Spleen (tissue), 13 donors: ENCODE measurements at regions of chr6 and their contacts with region 1.

Region 1: DNA sequence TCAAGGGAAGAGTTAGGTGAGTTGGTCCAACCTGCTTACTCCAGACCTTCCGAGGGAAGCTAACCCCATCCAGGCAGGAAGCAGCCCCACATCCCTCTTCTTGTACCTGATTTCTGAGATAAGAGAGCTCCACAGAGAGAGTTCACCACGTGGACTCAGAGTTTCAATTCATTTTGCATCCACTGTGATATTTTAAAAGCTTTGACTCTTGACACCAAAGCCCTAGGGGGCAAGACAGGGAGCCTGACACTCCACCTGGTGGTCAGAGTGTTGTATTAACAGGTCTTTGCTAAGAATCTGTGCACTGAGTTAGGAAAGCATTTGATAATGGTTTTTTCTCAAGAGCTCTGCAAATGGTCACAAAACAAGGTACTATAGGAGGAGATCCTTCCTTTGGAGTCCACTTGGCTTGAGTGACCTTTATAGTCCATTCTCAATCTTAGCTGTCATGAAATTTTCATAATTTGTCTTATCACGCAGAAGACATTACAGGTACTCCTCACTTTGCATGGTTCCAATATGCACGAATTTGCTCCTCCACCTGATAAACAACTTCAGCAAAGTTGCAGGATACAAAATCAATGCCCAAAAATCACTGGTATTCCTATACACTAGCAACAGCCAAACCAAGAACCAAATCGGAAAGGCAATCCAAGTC is 56.2 kb upstream of the RIPOR2 start:
- DNase-seq: peak; percentile 88
- H3K4me3 ChIP-seq: no peak overlapping the region
- H3K27ac ChIP-seq: peak overlapping the region in 7 of 8 donors; percentile 8 to 92 (median 62)
- H3K4me1 ChIP-seq: peaks cover 9 to 76% (median 34%) of the 10 kb centered on the region in 6 donors
- H3K27me3 ChIP-seq: no peaks in the 10 kb centered on the region
- CTCF ChIP-seq: peak; percentile 71 to 89 (median 80)
- POLR2A ChIP-seq: no peak

Region 2: DNA sequence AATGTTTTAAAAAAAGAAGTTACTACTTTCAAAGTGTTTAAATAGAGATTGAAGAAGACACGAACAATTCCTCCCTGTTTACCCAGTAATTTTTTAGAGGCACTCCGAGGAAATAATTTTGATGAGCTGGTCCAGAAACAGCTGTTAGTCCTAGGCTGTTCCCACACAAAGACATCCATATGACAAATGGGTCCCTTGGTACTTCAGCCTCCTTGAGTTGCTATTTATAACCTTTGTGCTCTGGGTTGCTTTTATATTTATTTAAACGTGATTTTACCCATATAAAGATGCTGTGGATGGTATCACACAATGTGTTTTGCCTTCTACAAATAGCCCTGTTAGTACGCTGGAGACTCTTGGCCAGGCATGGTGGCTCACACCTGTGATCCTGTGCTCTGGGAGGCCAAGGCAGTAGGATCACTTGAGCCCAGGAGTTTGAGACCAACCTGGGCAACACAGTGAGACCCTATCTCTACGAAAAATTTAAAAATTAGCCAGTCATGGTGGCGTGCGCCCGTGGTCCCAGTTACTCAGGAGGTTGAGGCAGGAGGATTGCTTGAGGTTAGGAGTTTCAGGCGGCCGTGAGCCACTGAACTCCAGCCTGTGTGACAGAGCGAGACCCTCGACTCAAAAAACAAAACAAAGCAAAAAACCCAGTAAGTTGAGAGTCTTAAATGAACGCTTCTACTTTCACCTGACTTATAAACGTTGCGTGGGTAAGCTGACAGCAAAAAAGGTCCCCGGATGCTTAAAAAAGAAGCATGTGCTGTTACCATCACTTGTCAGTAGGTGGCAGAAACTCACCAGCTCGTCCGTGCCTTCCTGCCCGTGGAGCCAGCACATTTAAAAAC is 136.3 kb before region 1 on chr6:
- intact Hi-C with region 1: loop called (anchors 5 kb)
- DNase-seq: peak; percentile 85
- H3K4me3 ChIP-seq: peak overlapping the region in 1 of 8 donors; percentile 5
- H3K27ac ChIP-seq: peak overlapping the region in 7 of 8 donors; percentile 4 to 93 (median 88)
- H3K4me1 ChIP-seq: peaks cover 42 to 67% (median 52%) of the 10 kb centered on the region in 6 donors
- H3K27me3 ChIP-seq: no peaks in the 10 kb centered on the region
- CTCF ChIP-seq: peak; percentile 66 to 93 (median 85)
- POLR2A ChIP-seq: no peak

Region 3: DNA sequence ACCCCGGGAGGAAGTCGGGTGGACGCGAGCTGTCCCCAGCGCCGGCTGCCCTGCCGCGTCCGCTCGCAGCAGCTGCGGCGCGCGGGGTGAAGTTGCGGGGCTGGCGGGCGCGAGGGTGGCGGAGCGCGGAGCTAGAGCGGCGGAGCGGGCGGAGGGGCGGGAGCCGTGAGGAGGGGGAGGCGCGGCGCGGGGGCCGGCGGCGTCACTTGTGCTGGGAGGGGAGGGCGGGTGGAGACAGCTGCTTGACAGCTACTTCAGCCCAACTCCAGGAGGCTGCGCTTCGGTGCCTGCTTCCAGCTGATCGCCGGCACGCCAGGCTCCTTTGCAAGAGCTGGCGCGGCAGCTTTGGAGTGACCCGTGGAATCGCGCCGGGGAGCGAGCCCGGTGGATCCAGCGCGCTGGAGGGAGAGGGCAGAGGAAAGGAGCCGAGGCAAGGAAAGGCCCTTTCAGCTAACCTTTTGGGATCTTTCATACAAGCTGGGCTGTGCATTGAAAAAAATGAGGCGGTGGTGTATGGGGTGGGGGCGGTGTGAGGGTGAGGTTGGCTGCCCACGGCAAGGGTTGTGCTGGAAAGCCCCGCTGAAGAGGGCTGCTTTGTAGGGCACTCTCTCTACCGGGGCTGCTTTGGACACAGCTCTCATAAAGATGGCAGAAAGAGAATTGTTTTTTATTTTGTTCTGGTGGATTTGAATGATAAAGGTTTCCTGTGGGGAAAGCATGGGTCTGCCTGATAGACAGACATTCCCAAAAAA is 80.8 kb before region 1 on chr6:
- intact Hi-C with region 1: no loop called
- DNase-seq: peak; percentile 91
- H3K4me3 ChIP-seq: peak overlapping the region; percentile 35 to 79 (median 52)
- H3K27ac ChIP-seq: peak overlapping the region; percentile 62 to 88 (median 79)
- H3K4me1 ChIP-seq: peaks cover 45 to 100% (median 96%) of the 10 kb centered on the region in 6 donors
- H3K27me3 ChIP-seq: no peaks in the 10 kb centered on the region
- CTCF ChIP-seq: no peak
- POLR2A ChIP-seq: no peak

Region 4: GRCh38 chr6:24933868-24934401 is 58.0 kb before region 1 on chr6:
- intact Hi-C with region 1: loop called (anchors 10 kb)
- DNase-seq: peak; percentile 58
- H3K4me3 ChIP-seq: peak overlapping the region; percentile 27 to 85 (median 59)
- H3K27ac ChIP-seq: peak overlapping the region; percentile 38 to 94 (median 88)
- H3K4me1 ChIP-seq: peaks cover 22 to 90% (median 66%) of the 10 kb centered on the region in 6 donors
- H3K27me3 ChIP-seq: no peaks in the 10 kb centered on the region
- CTCF ChIP-seq: peak; percentile 30 to 85 (median 75)
- POLR2A ChIP-seq: no peak